ENCODE measurements at regions of chr14 and their contacts with region 1.

Region 1: DNA sequence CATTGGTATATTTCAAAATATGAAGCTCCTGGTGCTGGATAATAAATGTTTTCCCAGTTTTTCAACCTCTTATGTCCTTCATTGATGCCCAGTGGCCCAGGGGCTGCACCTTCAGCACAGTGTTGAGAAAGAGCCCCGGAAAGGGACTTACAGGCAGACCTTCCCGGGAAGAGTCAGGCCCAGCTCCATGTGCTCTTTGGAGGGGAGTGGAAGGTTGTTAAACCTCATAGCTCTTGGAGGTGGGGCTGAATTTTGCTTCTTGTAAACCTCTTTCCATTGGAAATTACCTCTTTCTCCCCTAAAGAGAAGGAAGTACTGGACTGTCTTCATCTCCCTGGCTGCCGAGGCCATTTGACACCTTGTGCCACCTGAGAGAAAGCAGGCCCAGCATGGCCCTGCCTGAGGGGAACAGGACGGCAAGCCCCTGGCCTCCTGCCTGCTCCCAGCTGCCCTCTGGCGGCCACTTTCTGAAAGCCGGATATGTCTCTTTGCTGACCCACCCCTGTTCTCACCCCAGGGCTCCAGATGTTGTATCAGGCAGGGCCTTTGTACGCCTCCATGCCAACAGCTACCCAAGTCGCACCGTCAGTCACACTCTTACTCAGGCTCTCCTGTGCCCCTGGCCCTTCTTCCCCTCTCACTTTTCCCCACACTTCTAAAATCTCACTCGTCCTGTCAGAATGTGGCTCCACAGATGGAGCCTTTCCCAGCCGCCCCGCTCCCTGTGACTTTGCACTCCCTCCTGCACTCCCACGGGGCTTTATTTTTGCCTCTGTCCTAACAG is 43.0 kb downstream of the EVL start:
- DNase-seq: peak; percentile 25
- H3K4me3 ChIP-seq: no peak overlapping the region
- H3K27ac ChIP-seq: peak overlapping the region; percentile 1 to 70 (median 29)
- H3K4me1 ChIP-seq: peaks cover 20 to 59% (median 54%) of the 10 kb centered on the region in 3 donors
- H3K27me3 ChIP-seq: no peaks in the 10 kb centered on the region
- CTCF ChIP-seq: peak; percentile 57 to 93 (median 86)
- POLR2A ChIP-seq: no peak

Region 2: DNA sequence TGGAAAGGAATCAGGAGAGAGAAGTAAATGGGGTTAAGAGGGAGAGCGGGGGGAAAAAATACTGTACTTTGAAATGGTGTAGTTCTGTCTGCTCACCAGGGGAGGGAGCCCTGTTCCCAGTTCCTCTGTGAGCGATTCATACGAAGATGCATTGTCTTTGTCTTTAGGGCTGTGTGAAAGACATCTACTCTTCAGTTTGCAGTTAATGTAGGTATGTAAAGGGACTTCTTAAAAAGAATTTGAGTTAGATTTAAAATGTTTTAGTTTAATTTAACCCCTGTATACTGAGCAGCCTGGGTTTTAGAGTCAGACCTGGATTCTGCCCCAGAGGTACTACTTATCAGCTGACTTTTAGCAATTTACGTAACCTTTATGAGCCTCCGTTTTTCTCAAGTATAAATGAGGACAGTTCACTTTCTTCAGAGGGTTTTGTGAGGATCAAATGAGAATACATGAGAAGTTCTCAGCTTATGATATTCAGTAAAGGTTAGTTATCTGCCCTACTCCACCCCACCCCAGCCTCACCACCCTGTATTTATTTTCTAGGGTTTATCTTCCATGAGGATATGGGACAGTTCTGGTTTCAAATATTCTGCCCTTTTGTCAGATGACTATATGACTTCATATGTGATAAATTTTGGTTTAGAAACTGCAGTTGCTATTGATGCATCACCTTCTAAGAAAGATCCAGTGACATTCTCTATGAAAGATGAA is 125.5 kb before region 1 on chr14:
- intact Hi-C with region 1: loop called (anchors 5 kb)
- DNase-seq: no peak
- H3K4me3 ChIP-seq: no peak overlapping the region
- H3K27ac ChIP-seq: no peak overlapping the region
- H3K4me1 ChIP-seq: peaks cover 0 to 35% (median 4%) of the 10 kb centered on the region in 3 donors
- H3K27me3 ChIP-seq: no peaks in the 10 kb centered on the region
- CTCF ChIP-seq: peak; percentile 72 to 87 (median 84)
- POLR2A ChIP-seq: no peak

Region 3: GRCh38 chr14:100056964-100057795 is 51.1 kb before region 1 on chr14:
- intact Hi-C with region 1: loop called (anchors 10 kb)
- DNase-seq: no peak
- H3K4me3 ChIP-seq: no peak overlapping the region
- H3K27ac ChIP-seq: peak overlapping the region in 3 of 4 donors; percentile 68 to 79 (median 77)
- H3K4me1 ChIP-seq: peaks cover 17 to 58% (median 18%) of the 10 kb centered on the region in 3 donors
- H3K27me3 ChIP-seq: no peaks in the 10 kb centered on the region
- CTCF ChIP-seq: peak; percentile 14 to 60 (median 33)
- POLR2A ChIP-seq: no peak

Measured in esophagus squamous epithelium (tissue), 5 donors.